ENCODE measurements at regions of chr1 and their contacts with region 1.

Region 1: DNA sequence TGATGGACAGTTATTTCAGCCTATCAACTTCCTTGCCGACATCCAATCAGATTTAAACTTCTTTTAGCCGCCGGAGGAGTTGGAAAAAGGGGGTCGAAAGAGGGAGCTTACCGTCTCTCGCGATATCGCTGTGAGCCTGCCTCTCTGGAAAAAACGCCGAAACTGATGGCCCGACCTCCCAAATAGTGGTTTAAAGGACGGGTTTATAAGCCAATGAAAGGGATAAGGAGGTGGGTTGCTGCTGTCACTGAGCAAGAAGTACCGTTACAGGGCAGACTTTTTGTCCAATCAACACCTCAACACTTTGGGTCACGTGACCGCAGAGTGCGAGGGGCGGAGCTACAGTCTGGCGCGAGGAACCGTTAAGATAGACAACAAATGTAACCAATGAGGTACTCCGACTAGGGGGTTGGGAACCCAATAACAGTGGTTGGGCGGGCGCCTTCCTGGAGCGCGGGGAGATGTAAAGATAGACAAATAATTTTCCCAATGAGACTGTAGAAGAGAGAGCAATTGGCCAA is at the start of gene RBM15:
- DNase-seq: peak; percentile 99
- H3K4me3 Mint-ChIP-seq: no peak within 1 kb of the TSS
- H3K27ac Mint-ChIP-seq: no peak within 1 kb of the TSS
- H3K4me1 Mint-ChIP-seq: peaks cover 48% of the 10 kb centered on the region
- H3K27me3 Mint-ChIP-seq: no peaks in the 10 kb centered on the region
- total RNA-seq, gene RBM15: 91.0 to 91.5 TPM

Region 2: DNA sequence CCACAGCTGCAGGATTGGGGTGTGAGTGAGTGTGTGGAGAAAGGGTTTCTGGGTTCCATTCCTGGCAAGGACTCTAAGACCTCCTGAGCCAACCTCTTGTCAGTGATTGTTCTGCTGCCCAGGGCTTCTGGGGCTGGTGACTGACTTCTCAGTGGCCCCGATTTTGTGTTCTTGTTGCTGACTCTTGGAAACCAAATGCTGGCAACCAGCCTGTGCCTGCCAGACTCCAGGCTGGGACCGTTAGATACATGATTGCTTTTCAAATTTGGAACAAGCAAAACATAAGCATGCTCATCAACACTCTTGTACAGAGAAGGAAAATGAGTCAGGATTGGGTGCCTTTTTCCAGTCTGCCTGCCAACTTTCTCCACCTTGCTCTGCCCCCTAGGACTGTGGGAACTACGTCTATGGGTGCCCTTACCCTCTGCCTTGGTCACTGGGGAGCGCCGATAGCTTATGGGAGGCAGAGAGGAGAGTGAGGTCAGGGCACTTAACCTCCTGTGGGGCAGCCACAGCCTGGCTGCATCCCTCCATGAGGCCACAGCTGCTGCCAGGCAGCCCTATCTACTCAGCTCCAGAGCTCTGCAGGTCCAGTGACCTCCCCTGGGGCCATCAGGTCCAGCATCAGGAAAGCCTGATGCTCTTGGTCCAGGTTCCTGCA is 535.9 kb before region 1 on chr1:
- CTCF ChIA-PET with region 1: no interaction called
- intact Hi-C with region 1: loop called (anchors 5 kb)
- DNase-seq: peak; percentile 29
- H3K4me3 Mint-ChIP-seq: peak overlapping the region; percentile 36
- H3K27ac Mint-ChIP-seq: peak overlapping the region; percentile 73
- H3K4me1 Mint-ChIP-seq: peaks cover 50% of the 10 kb centered on the region
- H3K27me3 Mint-ChIP-seq: no peaks in the 10 kb centered on the region

Region 3: DNA sequence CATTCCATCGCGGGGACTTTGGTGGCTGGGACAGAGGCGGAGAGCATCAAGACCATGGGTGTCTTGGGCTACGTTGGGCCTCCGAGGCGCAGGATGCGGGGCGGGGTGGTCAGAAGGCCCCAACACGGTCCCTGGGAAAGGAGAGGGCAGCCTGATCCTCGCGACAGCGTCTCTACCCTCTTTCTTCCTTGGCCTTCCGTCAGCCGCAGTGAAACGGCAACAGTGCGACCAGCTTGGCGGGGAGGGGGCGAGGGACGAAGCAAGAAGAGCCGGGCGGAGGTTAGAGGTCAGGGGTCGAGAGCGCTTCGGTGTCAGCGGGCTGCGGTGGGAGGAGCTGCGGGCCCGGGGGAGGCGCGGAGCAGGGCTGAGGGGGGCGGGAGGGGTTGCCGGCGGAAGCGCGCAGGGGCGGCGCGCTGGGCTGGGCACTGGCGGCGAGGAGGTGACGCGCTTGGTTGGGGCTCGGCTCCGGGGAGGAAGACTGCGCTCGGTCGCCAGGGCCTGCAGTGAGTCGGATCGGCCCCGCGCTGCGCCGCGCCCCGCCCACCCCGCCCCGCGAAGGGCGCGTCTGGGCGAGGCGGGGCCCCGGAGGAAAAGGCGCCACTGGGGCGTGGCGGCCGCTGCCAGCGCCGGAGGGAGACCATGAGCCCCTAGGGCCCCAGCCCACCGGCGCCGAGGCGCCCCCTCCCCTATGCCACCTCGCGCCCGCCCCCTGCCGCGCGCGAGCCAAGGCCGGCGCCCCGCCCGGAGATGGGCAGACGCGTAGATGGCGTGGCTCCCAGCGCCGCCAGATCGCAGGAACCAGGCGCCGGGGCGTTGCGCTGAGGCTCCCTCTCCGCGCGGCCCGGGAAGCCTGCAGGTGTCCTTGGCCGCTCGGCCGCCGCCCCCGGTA is 129.0 kb before region 1 on chr1 and contains the start of gene KCNC4:
- CTCF ChIA-PET with region 1: interaction called, 81 read pairs
- intact Hi-C with region 1: loop called (anchors 1 kb)
- DNase-seq: peak; percentile 92
- H3K4me3 Mint-ChIP-seq: peak within 1 kb of the TSS; percentile 86
- H3K27ac Mint-ChIP-seq: peak within 1 kb of the TSS; percentile 85
- H3K4me1 Mint-ChIP-seq: peaks cover 49% of the 10 kb centered on the region
- H3K27me3 Mint-ChIP-seq: no peaks in the 10 kb centered on the region
- total RNA-seq, gene KCNC4: 9.7 TPM

Region 4: GRCh38 chr1:110355321-110355720 is 16.4 kb after region 1 on chr1:
- CTCF ChIA-PET with region 1: no interaction called
- intact Hi-C with region 1: loop called (anchors 2 kb)
- DNase-seq: no peak
- H3K4me3 Mint-ChIP-seq: no peak overlapping the region
- H3K27ac Mint-ChIP-seq: no peak overlapping the region
- H3K4me1 Mint-ChIP-seq: peaks cover 40% of the 10 kb centered on the region
- H3K27me3 Mint-ChIP-seq: no peaks in the 10 kb centered on the region

Region 5: GRCh38 chr1:110674337-110675059 is 335.6 kb after region 1 on chr1 and contains the start of gene KCNA3:
- CTCF ChIA-PET with region 1: no interaction called
- intact Hi-C with region 1: loop called (anchors 1 kb)
- DNase-seq: peak; percentile 58
- H3K4me3 Mint-ChIP-seq: peak within 1 kb of the TSS; percentile 96
- H3K27ac Mint-ChIP-seq: peak within 1 kb of the TSS; percentile 92
- H3K4me1 Mint-ChIP-seq: peaks cover 24% of the 10 kb centered on the region
- H3K27me3 Mint-ChIP-seq: no peaks in the 10 kb centered on the region
- total RNA-seq, gene KCNA3: 15.3 to 15.4 TPM

Region 6: GRCh38 chr1:111448918-111449702 is 1110.2 kb after region 1 on chr1 and contains the starts of genes ATP5PB and WDR77:
- CTCF ChIA-PET with region 1: no interaction called
- intact Hi-C with region 1: loop called (anchors 2 kb)
- DNase-seq: peak; percentile 96
- H3K4me3 Mint-ChIP-seq: peak within 1 kb of the TSS; percentile 100
- H3K27ac Mint-ChIP-seq: peak within 1 kb of the TSS; percentile 96
- H3K4me1 Mint-ChIP-seq: peaks cover 71% of the 10 kb centered on the region
- H3K27me3 Mint-ChIP-seq: no peaks in the 10 kb centered on the region
- total RNA-seq, gene ATP5PB: 324 to 331 TPM
- total RNA-seq, gene WDR77: 43.1 to 48.8 TPM

Measured in activated naive CD4-positive, alpha-beta T cell treated with anti-CD3 and anti-CD28 coated beads for 36 hours (primary cell).